Aorta (tissue), 5 donors: ENCODE measurements at regions of chr5 and their contacts with region 1.

Region 1: GRCh38 chr5:61331407-61332357 is at the start of gene ZSWIM6:
- DNase-seq: peak; percentile 100
- ATAC-seq: peak; percentile 96
- H3K4me3 ChIP-seq: peak within 1 kb of the TSS; percentile 90 to 98
- H3K27ac ChIP-seq: peak within 1 kb of the TSS; percentile 99
- H3K4me1 ChIP-seq: peaks cover 0 to 4% of the 10 kb centered on the region in 2 donors
- H3K27me3 ChIP-seq: no peaks in the 10 kb centered on the region
- total RNA-seq, gene ZSWIM6: 19.5 to 21.8 TPM

Region 2: GRCh38 chr5:60944904-60945812 is 386.5 kb before region 1 on chr5 and contains the starts of genes ERCC8 and NDUFAF2:
- intact Hi-C with region 1: loop called (anchors 5 to 10 kb)
- DNase-seq: peak; percentile 94 to 95
- ATAC-seq: peak; percentile 99
- H3K4me3 ChIP-seq: peak within 1 kb of the TSS; percentile 74 to 92
- H3K27ac ChIP-seq: peak within 1 kb of the TSS in 1 of 2 donors; percentile 50
- H3K4me1 ChIP-seq: peaks cover 0 to 2% of the 10 kb centered on the region in 2 donors
- H3K27me3 ChIP-seq: no peaks in the 10 kb centered on the region
- total RNA-seq, gene ERCC8: 9.7 to 10.4 TPM
- total RNA-seq, gene NDUFAF2: 26.1 to 32.1 TPM

Region 3: DNA sequence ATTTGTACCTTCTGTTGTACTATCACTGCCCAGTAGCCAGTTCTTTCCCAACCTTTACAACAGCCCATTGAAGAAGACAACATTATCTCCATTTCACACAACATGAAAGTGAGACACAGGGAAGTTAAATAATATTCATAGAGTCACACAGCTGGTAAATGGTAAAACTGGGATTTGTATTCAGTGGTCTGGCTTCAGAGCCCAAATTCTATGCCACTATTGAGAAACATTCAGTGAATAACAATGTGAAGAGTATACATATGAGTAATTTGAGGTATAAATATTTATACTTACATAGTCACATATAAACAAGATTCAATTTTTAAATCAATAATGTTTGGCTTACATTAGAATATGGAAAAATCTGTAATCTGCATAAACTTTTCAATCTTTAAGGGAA is 183.2 kb before region 1 on chr5:
- intact Hi-C with region 1: no loop called
- DNase-seq: no peak
- ATAC-seq: no peak
- H3K4me3 ChIP-seq: no peak overlapping the region
- H3K27ac ChIP-seq: no peak overlapping the region
- H3K4me1 ChIP-seq: no peaks in the 10 kb centered on the region
- H3K27me3 ChIP-seq: no peaks in the 10 kb centered on the region

Region 4: DNA sequence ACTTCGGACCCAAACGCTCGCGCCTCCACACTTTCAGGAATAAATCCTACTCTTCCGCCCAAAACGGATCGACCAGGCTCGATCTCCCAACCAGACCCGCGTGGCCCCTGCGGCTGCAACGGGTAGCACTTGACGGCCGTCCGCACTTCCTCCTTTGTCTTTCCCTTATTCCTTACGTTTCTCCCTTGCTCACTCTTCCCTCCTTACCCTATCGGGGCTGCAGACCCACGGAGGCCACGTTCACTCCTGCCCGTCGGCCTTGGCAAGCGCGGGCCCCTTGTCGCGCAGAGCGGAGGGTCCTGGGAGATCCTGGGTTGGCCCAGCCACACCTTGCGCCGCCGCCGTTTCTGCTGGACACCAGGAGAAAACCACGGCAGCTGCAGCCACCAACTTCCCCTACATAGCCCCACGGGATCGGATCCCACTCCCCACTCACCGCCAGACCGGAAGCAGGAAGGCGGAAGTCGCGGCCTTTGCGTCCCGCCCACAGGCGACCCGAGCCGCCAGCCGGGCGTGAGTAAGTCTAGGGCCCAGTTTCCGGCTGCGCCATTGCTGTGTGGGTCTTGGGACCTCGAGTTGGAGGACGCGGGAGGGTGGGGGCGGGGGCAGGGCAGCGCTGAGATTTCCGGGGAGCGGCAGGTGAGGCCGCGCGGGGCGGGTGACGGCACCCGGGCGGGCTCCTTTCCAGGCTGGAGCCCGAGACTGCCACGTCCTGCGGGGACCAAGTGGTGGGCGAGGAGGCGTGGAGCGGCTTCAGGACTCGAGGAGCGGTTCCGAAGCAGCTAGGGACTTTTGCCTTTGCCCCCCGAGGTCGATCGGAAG is 169.5 kb before region 1 on chr5 and contains the start of gene SMIM15:
- intact Hi-C with region 1: loop called (anchors 1 to 5 kb)
- DNase-seq: peak; percentile 94 to 95
- ATAC-seq: peak; percentile 97
- H3K4me3 ChIP-seq: peak within 1 kb of the TSS; percentile 49 to 67
- H3K27ac ChIP-seq: peak within 1 kb of the TSS in 1 of 2 donors; percentile 52
- H3K4me1 ChIP-seq: peaks cover 3 to 6% of the 10 kb centered on the region in 2 donors
- H3K27me3 ChIP-seq: no peaks in the 10 kb centered on the region
- total RNA-seq, gene SMIM15: 33.3 to 41.1 TPM

Region 5: DNA sequence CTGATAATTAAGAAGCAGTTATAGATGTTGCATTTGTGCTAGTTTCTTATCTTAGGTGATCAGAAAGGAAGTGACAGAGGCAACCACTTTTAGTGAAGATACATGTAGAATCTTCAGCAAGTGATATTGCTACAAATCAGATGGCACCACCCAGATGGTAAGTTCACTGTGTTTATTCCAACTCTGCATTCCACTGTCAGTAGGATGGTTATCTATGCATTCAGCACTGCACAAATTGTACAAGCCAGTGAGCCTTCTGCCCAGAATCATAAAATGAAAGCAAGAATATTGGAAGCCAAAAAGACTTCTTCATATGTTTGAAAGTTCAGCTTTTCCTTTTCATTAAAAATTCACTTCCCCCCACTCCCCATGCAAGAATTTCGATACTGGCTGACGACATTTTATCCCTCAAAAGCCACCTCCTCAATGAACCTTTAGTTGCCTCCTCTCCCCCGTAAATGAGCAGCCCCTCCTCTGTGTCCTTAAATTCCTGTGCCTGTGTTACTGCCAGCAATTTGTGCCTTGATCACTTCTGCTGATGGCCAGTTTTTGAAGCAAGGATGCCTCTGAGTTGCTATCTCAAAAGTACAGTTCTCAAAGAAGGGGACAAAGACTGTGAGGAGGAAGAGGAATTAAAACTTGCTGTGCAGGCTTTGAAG is 91.9 kb after region 1 on chr5:
- intact Hi-C with region 1: no loop called
- DNase-seq: no peak
- ATAC-seq: no peak
- H3K4me3 ChIP-seq: no peak overlapping the region
- H3K27ac ChIP-seq: no peak overlapping the region
- H3K4me1 ChIP-seq: peaks cover 1 to 2% of the 10 kb centered on the region in 2 donors
- H3K27me3 ChIP-seq: no peaks in the 10 kb centered on the region

Region 6: DNA sequence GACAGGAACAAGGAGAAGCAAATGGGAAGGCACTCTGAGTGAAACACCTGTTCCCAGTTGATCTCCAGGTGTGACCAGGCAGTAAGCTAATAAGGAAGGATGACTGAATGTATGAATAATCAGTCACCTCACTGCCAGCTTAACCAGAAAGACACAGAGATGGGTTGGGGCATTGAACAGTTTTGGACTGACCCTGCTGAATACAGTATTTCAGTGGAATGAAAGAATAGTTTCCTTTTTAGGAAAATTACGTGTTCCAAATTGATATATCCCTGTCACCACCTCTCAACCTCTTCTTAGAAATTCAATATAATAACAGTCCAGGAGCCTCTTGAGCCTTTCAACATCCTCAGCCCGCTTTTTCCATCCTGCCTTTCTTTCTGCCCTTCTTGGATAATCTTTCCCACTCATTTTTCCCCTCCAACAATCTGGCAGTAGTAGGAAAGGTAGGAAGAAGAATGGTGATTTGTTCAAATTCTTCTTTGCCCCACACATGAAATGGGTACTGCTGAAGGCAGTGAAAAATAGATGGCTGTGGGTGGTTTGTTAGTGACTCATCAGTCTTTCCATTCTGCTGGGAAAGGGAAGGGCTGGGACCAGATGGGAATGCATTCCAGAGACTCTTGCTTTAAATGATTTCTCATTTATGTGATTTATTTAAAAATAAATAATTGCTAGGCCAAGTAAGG is 118.3 kb after region 1 on chr5:
- intact Hi-C with region 1: loop called (anchors 5 to 10 kb)
- DNase-seq: peak in 1 of 2 donors; percentile 42
- ATAC-seq: peak; percentile 89
- H3K4me3 ChIP-seq: no peak overlapping the region
- H3K27ac ChIP-seq: peak overlapping the region; percentile 87 to 98
- H3K4me1 ChIP-seq: peaks cover 5 to 7% of the 10 kb centered on the region in 2 donors
- H3K27me3 ChIP-seq: no peaks in the 10 kb centered on the region

Region 7: GRCh38 chr5:61658592-61659008 is 326.9 kb after region 1 on chr5:
- intact Hi-C with region 1: loop called (anchors 5 kb)
- DNase-seq: peak; percentile 86 to 96
- ATAC-seq: peak; percentile 82
- H3K4me3 ChIP-seq: no peak overlapping the region
- H3K27ac ChIP-seq: no peak overlapping the region
- H3K4me1 ChIP-seq: no peaks in the 10 kb centered on the region
- H3K27me3 ChIP-seq: no peaks in the 10 kb centered on the region